Dorsolateral prefrontal cortex (tissue), 120 donors: ENCODE measurements at regions of chr17 and their contacts with region 1.

Region 1: GRCh38 chr17:28612936-28613872 is 781 bp downstream of the RSKR start:
- DNase-seq: peak in 4 of 10 donors; percentile 20 to 51 (median 32)
- H3K4me3 ChIP-seq: peak overlapping the region in 56 of 59 donors; percentile 3 to 60 (median 43)
- H3K27ac ChIP-seq: peak overlapping the region in 53 of 59 donors; percentile 29 to 98 (median 80)
- H3K27me3 ChIP-seq: no peaks in the 10 kb centered on the region
- CTCF ChIP-seq: peak; percentile 31 to 83 (median 68)

Region 2: GRCh38 chr17:28494445-28495188 is 118.6 kb before region 1 on chr17:
- intact Hi-C with region 1: loop called in 1 of 2 experiments (anchors 1 kb)
- DNase-seq: peak; percentile 63 to 85 (median 76)
- H3K4me3 ChIP-seq: no peak overlapping the region
- H3K27ac ChIP-seq: no peak overlapping the region
- H3K27me3 ChIP-seq: no peaks in the 10 kb centered on the region
- CTCF ChIP-seq: peak; percentile 59 to 92 (median 84)

Region 3: DNA sequence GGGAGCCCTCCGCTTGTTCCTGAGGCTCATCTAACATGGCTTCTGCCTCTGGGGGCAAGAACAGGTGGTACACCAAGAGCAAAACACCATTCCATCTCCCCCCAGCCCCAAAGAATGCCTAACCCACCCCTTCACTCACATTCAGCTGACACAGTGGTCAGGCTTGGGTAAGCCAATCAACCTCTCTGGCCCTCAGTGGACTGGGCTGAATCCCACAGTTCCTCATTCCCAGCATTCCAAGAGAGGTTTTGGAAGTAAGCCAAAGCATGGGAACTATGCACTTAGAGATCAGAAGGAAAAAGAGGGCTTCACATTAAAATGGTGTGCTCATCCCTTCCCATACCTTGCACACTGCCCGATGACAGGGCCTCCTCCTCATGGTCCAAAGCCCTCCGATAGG is 49.7 kb before region 1 on chr17:
- intact Hi-C with region 1: no loop called
- DNase-seq: no peak
- H3K4me3 ChIP-seq: no peak overlapping the region
- H3K27ac ChIP-seq: no peak overlapping the region
- H3K27me3 ChIP-seq: no peaks in the 10 kb centered on the region
- CTCF ChIP-seq: no peak